Transverse colon (tissue), 4 donors: ENCODE measurements at regions of chrX and their contacts with region 1.

Region 1: GRCh38 chrX:130393451-130394074 is 8.1 kb upstream of the GPR119 start:
- DNase-seq: peak; percentile 16
- H3K4me3 ChIP-seq: no peak overlapping the region
- H3K27ac ChIP-seq: no peak overlapping the region
- H3K4me1 ChIP-seq: no peaks in the 10 kb centered on the region
- H3K27me3 ChIP-seq: no peaks in the 10 kb centered on the region
- CTCF ChIP-seq: peak in 4 of 5 experiments; percentile 25 to 49 (median 42)
- EP300 ChIP-seq: no peak
- POLR2A ChIP-seq: no peak

Region 2: DNA sequence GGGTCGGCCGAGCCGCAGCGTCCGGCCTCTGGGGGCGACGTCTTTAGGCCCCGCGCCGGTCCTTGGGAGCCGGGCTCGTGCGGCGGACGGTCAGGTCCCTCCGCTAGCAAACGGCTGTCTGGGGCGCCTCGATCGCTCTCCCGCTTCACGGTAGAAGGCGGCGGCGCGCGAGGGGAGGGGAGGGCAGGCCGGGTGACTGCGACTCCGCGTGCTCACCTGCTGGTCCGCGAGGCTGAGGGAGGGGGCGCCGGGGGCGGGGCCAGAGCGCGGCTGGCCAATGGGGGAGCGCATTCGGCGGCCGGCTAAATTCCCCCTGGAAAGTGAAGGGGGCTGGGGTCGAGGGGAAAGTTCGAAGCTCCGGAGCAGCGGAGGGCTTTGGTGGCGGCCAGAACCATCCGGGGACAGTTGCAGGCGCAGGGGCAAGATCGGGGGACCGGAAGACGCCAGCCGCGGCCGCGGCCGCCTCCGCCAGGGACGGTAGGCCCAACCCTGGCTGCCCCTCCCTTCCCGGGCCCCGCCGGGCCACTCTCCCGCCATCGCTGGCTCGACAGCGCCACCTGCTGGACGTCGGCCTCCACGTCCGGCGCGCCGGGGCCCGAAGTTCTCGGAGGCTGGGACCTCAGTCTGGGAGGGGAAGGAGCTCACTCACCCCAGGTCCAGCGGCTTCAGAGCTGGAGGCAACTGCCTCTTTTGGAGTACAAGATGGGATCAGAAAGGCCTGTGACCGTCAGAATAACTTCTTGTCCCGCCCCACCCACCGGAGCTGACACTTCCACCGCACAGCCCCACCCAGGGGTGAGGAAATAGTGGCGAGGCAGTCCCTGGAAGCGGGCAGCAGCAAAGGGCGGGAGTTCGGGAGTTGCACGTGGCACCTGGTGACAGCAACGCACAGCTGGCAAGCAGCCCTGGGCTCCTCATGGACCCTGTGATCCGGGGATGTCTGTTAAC is 333.2 kb before region 1 on chrX:
- in situ Hi-C with region 1: no loop called
- intact Hi-C with region 1: no loop called
- DNase-seq: peak; percentile 86
- H3K4me3 ChIP-seq: peak overlapping the region; percentile 30 to 68 (median 42)
- H3K27ac ChIP-seq: peak overlapping the region; percentile 62 to 86 (median 82)
- H3K4me1 ChIP-seq: peaks cover 0 to 11% (median 4%) of the 10 kb centered on the region in 4 donors
- H3K27me3 ChIP-seq: no peaks in the 10 kb centered on the region
- CTCF ChIP-seq: peak; percentile 77 to 95 (median 86)
- EP300 ChIP-seq: no peak
- POLR2A ChIP-seq: peak; percentile 21

Region 3: DNA sequence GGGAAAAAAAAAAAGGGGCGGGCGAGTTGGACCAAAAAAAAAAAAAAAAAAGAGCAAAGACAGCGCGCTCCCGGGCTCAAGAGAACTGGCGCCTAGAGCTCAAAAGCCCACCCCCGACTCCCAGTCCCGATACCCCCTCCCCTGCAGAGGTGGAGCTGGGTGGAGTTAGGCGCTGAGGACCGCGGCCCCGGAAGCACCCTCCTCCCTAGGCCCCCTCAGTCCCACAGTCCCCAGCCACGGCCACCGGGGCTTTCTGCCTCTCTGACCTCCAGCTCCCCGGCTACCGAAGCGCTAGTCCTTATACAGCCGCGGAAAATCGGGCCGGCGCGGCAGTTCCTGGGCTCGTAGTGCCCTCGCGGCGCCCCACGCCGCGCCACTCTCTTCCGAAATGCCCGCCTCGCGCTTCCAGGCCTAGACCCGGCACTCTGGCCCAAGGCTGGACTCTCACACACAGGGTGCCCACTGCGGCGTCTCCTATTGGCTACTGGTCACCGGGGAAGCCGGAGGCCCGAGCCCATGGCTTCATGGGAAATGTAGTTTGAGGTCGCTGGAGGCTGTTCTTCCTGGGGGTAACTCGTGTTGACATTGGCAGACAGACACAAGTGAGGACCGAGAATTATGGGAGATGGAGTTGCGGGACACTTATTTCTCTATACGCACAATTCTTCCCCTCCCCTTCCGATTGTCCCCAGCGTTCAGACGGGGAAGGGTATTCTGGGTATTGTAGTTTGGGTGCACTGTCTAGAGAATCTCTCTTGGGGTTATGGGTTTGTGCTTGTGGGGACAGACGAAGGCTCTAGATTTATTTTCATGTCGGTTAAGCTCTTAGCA is 509.4 kb after region 1 on chrX and contains the start of gene ENOX2:
- in situ Hi-C with region 1: loop called in 2 of 4 experiments (anchors 25 kb)
- intact Hi-C with region 1: no loop called
- DNase-seq: peak; percentile 91
- H3K4me3 ChIP-seq: peak within 1 kb of the TSS; percentile 45 to 90 (median 82)
- H3K27ac ChIP-seq: peak within 1 kb of the TSS; percentile 74 to 88 (median 84)
- H3K4me1 ChIP-seq: peaks cover 0 to 7% (median 3%) of the 10 kb centered on the region in 4 donors
- H3K27me3 ChIP-seq: no peaks in the 10 kb centered on the region
- CTCF ChIP-seq: peak in 2 of 5 experiments; percentile 27 to 36
- EP300 ChIP-seq: no peak
- POLR2A ChIP-seq: peak; percentile 78
- total RNA-seq, gene ENOX2: 1.5 to 10.4 (median 4.6) TPM

Region 4: GRCh38 chrX:130916636-130917422 is 523.3 kb after region 1 on chrX:
- in situ Hi-C with region 1: loop called in 3 of 4 experiments (anchors 10 to 25 kb)
- intact Hi-C with region 1: loop called (anchors 2 kb)
- DNase-seq: peak; percentile 35
- H3K4me3 ChIP-seq: no peak overlapping the region
- H3K27ac ChIP-seq: no peak overlapping the region
- H3K4me1 ChIP-seq: no peaks in the 10 kb centered on the region
- H3K27me3 ChIP-seq: no peaks in the 10 kb centered on the region
- CTCF ChIP-seq: peak; percentile 57 to 87 (median 65)
- EP300 ChIP-seq: no peak
- POLR2A ChIP-seq: no peak